Aorta (tissue), 5 donors: ENCODE measurements at regions of chr2 and their contacts with region 1.

Region 1: GRCh38 chr2:110677530-110678456 is at the start of gene BUB1:
- DNase-seq: peak; percentile 99
- ATAC-seq: peak; percentile 99
- H3K4me3 ChIP-seq: peak within 1 kb of the TSS; percentile 75 to 83
- H3K27ac ChIP-seq: peak within 1 kb of the TSS; percentile 54 to 79
- H3K4me1 ChIP-seq: no peaks in the 10 kb centered on the region
- H3K27me3 ChIP-seq: no peaks in the 10 kb centered on the region
- total RNA-seq, gene BUB1: 0.84 to 2.5 TPM

Region 2: DNA sequence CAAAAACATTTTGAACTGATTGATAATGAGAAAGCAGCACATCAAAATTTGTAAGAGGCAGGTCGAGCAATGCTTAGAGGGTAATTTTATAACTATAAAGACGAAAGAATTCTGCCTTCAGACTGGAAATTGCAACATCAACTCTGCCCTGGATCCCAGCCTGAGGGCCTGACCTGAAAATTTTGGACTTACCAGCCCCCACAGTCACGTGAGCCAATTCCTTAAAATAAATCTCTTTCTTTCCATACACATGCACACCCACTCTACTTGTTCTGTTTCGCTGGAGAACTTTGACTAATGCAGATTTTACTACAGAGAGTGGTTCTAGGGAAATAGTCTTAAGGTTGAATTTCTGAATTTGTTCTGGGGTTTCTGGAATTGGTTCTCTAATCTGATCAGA is 39.9 kb after region 1 on chr2:
- intact Hi-C with region 1: loop called in 1 of 2 experiments (anchors 2 kb)
- DNase-seq: peak; percentile 70 to 83
- ATAC-seq: peak; percentile 63
- H3K4me3 ChIP-seq: no peak overlapping the region
- H3K27ac ChIP-seq: no peak overlapping the region
- H3K4me1 ChIP-seq: peaks cover 0 to 4% of the 10 kb centered on the region in 2 donors
- H3K27me3 ChIP-seq: no peaks in the 10 kb centered on the region